A673 (cell line): ENCODE measurements at regions of chr18 and their contacts with region 1.

Region 1: GRCh38 chr18:47100214-47100831 is 50.0 kb downstream of the HDHD2 start:
- DNase-seq: peak; percentile 61
- H3K4me3 ChIP-seq: no peak overlapping the region
- H3K27ac ChIP-seq: no peak overlapping the region
- H3K4me1 ChIP-seq: no peaks in the 10 kb centered on the region
- H3K27me3 ChIP-seq: no peaks in the 10 kb centered on the region
- CTCF ChIP-seq: peak; percentile 76

Region 2: GRCh38 chr18:46536215-46536874 is 564.0 kb before region 1 on chr18:
- CTCF ChIA-PET with region 1: no interaction called
- POLR2A ChIA-PET with region 1: no interaction called
- intact Hi-C with region 1: no loop called
- DNase-seq: peak; percentile 49
- H3K4me3 ChIP-seq: no peak overlapping the region
- H3K27ac ChIP-seq: no peak overlapping the region
- H3K4me1 ChIP-seq: no peaks in the 10 kb centered on the region
- H3K27me3 ChIP-seq: no peaks in the 10 kb centered on the region
- CTCF ChIP-seq: no peak

Region 3: GRCh38 chr18:46899274-46899948 is 200.9 kb before region 1 on chr18:
- CTCF ChIA-PET with region 1: no interaction called
- POLR2A ChIA-PET with region 1: no interaction called
- intact Hi-C with region 1: no loop called
- DNase-seq: no peak
- H3K4me3 ChIP-seq: no peak overlapping the region
- H3K27ac ChIP-seq: peak overlapping the region; percentile 24
- H3K4me1 ChIP-seq: peaks cover 20% of the 10 kb centered on the region
- H3K27me3 ChIP-seq: no peaks in the 10 kb centered on the region
- CTCF ChIP-seq: no peak

Region 4: DNA sequence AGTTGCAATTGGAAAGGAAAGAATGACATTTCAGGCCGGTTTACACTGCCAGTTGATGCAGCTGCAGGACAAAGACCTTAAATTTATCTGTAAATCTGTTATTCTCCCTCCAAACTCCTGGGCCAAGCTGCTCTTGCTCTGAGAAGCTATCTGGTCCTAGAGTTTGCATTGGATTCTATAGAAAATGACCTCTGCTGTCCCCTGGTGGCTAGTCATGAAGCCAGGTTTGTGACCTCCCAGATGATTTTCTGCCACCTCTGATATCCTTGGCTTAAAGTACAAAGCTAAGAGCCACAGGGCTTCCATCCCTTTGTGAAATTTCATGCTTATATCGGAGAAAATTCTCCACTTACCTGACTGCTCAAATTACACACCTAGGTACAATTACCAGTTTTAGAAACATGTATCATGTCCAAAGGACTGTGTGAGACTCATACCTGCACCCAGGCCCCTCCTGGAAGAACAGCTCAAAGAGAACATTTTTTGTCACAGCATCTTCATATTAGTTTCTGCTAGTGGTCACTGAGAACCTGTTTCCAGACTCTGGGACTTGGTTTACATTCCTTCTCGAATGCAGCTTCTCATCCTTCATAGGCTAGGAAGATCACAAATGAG is 104.7 kb after region 1 on chr18:
- CTCF ChIA-PET with region 1: no interaction called
- POLR2A ChIA-PET with region 1: no interaction called
- intact Hi-C with region 1: loop called (anchors 2 kb)
- DNase-seq: peak; percentile 35
- H3K4me3 ChIP-seq: no peak overlapping the region
- H3K27ac ChIP-seq: no peak overlapping the region
- H3K4me1 ChIP-seq: no peaks in the 10 kb centered on the region
- H3K27me3 ChIP-seq: peaks cover 61% of the 10 kb centered on the region
- CTCF ChIP-seq: peak; percentile 64

Region 5: DNA sequence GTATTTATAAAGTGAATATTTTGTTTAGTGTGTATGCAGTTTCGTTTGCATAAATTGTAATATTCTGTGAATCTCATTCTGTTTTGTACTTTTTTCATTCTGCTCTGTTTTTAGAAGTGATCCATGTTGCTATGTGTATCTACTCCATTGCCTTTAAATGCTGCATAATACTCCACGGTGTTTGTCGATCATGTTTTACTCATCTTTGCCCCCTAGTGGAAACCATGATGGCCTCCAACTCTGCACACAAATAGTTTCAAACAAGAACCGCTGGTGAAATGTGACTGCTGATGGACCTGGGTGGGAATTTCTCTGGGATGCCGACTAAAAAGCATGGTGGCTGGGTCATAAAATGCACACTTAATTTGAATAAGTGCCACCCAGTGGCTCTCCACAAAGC is 183.2 kb after region 1 on chr18:
- CTCF ChIA-PET with region 1: no interaction called
- POLR2A ChIA-PET with region 1: no interaction called
- intact Hi-C with region 1: loop called (anchors 2 kb)
- DNase-seq: peak; percentile 67
- H3K4me3 ChIP-seq: no peak overlapping the region
- H3K27ac ChIP-seq: no peak overlapping the region
- H3K4me1 ChIP-seq: no peaks in the 10 kb centered on the region
- H3K27me3 ChIP-seq: peaks cover 33% of the 10 kb centered on the region
- CTCF ChIP-seq: peak; percentile 70

Region 6: DNA sequence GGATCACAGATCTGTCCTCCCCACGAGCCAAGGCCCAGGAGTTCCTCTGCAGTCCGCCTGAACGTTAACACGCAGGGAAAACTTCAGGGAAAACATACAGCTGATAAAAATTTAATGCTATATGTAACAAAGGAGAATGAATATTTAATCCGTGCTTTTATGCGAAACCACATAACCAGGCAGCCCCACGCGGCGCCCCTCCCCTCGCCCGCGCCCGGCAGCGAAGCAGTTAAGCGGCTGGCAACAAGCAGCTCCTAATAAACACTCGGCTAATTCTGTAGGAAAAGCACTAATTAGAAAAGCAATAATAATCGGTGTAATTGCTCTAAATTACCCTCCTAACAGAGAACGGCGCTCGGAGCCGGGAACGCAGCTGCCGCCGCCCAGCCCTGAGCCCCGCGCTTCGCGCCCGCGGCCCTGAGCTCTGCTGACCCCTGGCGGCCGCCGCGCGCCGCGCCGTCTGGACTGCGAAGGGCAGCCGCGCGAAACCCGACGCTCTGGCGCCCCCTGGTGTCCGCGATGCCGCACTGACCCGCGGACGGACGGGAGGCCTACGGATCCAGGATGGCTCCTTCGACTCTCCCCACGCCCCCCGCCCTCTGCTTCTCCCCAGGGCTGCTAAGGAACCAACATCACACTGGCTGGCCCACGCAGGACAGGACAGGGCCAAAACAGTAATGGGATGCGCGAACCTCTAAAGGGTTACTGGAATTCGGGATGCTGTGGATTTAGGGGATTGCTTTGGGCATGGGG is 648.7 kb after region 1 on chr18:
- CTCF ChIA-PET with region 1: no interaction called
- POLR2A ChIA-PET with region 1: no interaction called
- intact Hi-C with region 1: loop called (anchors 5 kb)
- DNase-seq: peak; percentile 73
- H3K4me3 ChIP-seq: peak overlapping the region; percentile 29
- H3K27ac ChIP-seq: no peak overlapping the region
- H3K4me1 ChIP-seq: no peaks in the 10 kb centered on the region
- H3K27me3 ChIP-seq: peaks cover 4% of the 10 kb centered on the region
- CTCF ChIP-seq: peak; percentile 93